ENCODE measurements at regions of chr21 and their contacts with region 1.

Region 1: GRCh38 chr21:38170280-38170679 is 86.5 kb upstream of the KCNJ15 start:
- DNase-seq: peak; percentile 15 to 53
- H3K4me3 ChIP-seq: no peak overlapping the region
- H3K27ac ChIP-seq: no peak overlapping the region
- H3K4me1 ChIP-seq: peaks cover 2 to 10% (median 6%) of the 10 kb centered on the region in 4 experiments; a peak in 5 of 7 replicates
- H3K27me3 ChIP-seq: no peaks in the 10 kb centered on the region; a peak in 1 of 7 replicates
- CTCF ChIP-seq: peak; percentile 68 to 87 (median 75)
- EP300 ChIP-seq: no peak
- POLR2A ChIP-seq: no peak
- RAD21 ChIP-seq: peak; percentile 92 to 95

Region 2: GRCh38 chr21:37319551-37319950 is 850.7 kb before region 1 on chr21:
- CTCF ChIA-PET with region 1: no interaction called
- POLR2A ChIA-PET with region 1: no interaction called
- DNase-seq: no peak
- H3K4me3 ChIP-seq: no peak overlapping the region
- H3K27ac ChIP-seq: no peak overlapping the region
- H3K4me1 ChIP-seq: no peaks in the 10 kb centered on the region
- H3K27me3 ChIP-seq: no peaks in the 10 kb centered on the region
- CTCF ChIP-seq: no peak
- EP300 ChIP-seq: no peak
- POLR2A ChIP-seq: no peak
- RAD21 ChIP-seq: no peak

Region 3: GRCh38 chr21:37958537-37958936 is 211.7 kb before region 1 on chr21:
- CTCF ChIA-PET with region 1: no interaction called
- POLR2A ChIA-PET with region 1: no interaction called
- DNase-seq: no peak
- H3K4me3 ChIP-seq: no peak overlapping the region
- H3K27ac ChIP-seq: no peak overlapping the region
- H3K4me1 ChIP-seq: no peaks in the 10 kb centered on the region
- H3K27me3 ChIP-seq: no peaks in the 10 kb centered on the region
- CTCF ChIP-seq: no peak
- EP300 ChIP-seq: no peak
- POLR2A ChIP-seq: no peak
- RAD21 ChIP-seq: no peak

Region 4: DNA sequence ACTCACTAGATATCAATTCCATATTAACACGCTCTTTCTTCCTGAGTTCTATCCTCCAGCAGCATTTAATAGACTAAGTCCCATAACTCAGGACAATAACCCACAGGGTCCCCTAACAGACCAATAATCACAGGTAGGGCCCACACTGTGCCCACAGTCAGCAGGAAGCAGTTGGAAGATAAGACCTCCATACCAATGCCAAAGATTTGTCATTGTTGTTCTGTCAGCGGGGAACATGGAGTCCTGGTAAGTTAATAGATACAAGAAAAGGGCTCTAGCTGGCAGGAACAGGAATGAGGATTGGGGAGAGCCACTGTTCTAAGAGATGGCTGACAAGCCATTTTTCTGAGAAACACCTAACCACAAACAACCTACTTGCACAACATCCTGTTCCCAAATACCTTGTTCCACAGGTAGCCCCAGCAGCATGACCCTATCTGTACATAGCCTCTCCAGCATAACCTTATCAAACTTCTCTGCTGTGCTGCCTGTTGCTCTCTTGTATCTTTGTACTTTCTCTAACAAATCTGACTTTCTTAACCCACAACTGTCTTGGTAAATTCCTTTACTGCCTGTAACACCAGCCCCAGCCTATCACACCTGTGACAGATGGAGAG is 55.5 kb before region 1 on chr21:
- CTCF ChIA-PET with region 1: no interaction called
- POLR2A ChIA-PET with region 1: no interaction called
- DNase-seq: no peak
- H3K4me3 ChIP-seq: no peak overlapping the region
- H3K27ac ChIP-seq: no peak overlapping the region
- H3K4me1 ChIP-seq: no peaks in the 10 kb centered on the region
- H3K27me3 ChIP-seq: no peaks in the 10 kb centered on the region
- CTCF ChIP-seq: no peak
- EP300 ChIP-seq: no peak
- POLR2A ChIP-seq: no peak
- RAD21 ChIP-seq: no peak

Region 5: GRCh38 chr21:38159355-38159754 is 10.9 kb before region 1 on chr21:
- CTCF ChIA-PET with region 1: interaction called, 73 read pairs
- POLR2A ChIA-PET with region 1: no interaction called
- DNase-seq: peak; percentile 39 to 72
- H3K4me3 ChIP-seq: no peak overlapping the region
- H3K27ac ChIP-seq: no peak overlapping the region
- H3K4me1 ChIP-seq: no peaks in the 10 kb centered on the region
- H3K27me3 ChIP-seq: no peaks in the 10 kb centered on the region
- CTCF ChIP-seq: peak; percentile 66 to 88 (median 75)
- EP300 ChIP-seq: no peak
- POLR2A ChIP-seq: no peak
- RAD21 ChIP-seq: peak; percentile 81 to 88

Region 6: GRCh38 chr21:38181096-38181495 is 10.8 kb after region 1 on chr21:
- CTCF ChIA-PET with region 1: interaction called, 18 read pairs
- POLR2A ChIA-PET with region 1: no interaction called
- DNase-seq: no peak
- H3K4me3 ChIP-seq: no peak overlapping the region
- H3K27ac ChIP-seq: no peak overlapping the region
- H3K4me1 ChIP-seq: no peaks in the 10 kb centered on the region
- H3K27me3 ChIP-seq: no peaks in the 10 kb centered on the region
- CTCF ChIP-seq: no peak
- EP300 ChIP-seq: no peak
- POLR2A ChIP-seq: no peak
- RAD21 ChIP-seq: no peak

Region 7: GRCh38 chr21:38205940-38206339 is 35.7 kb after region 1 on chr21:
- CTCF ChIA-PET with region 1: interaction called, 14 read pairs
- POLR2A ChIA-PET with region 1: no interaction called
- DNase-seq: no peak
- H3K4me3 ChIP-seq: no peak overlapping the region
- H3K27ac ChIP-seq: no peak overlapping the region
- H3K4me1 ChIP-seq: no peaks in the 10 kb centered on the region
- H3K27me3 ChIP-seq: no peaks in the 10 kb centered on the region
- CTCF ChIP-seq: no peak
- EP300 ChIP-seq: no peak
- POLR2A ChIP-seq: no peak
- RAD21 ChIP-seq: no peak

Region 8: GRCh38 chr21:38219049-38219628 is 48.9 kb after region 1 on chr21:
- CTCF ChIA-PET with region 1: interaction called, 20 read pairs
- POLR2A ChIA-PET with region 1: no interaction called
- DNase-seq: peak; percentile 10 to 87
- H3K4me3 ChIP-seq: no peak overlapping the region
- H3K27ac ChIP-seq: no peak overlapping the region
- H3K4me1 ChIP-seq: no peaks in the 10 kb centered on the region
- H3K27me3 ChIP-seq: no peaks in the 10 kb centered on the region
- CTCF ChIP-seq: peak; percentile 83 to 88 (median 85)
- EP300 ChIP-seq: no peak
- POLR2A ChIP-seq: no peak
- RAD21 ChIP-seq: peak; percentile 73 to 88

Region 9: GRCh38 chr21:38333301-38334272 is 163.3 kb after region 1 on chr21:
- CTCF ChIA-PET with region 1: interaction called, 28 read pairs
- POLR2A ChIA-PET with region 1: no interaction called
- DNase-seq: no peak
- H3K4me3 ChIP-seq: no peak overlapping the region
- H3K27ac ChIP-seq: no peak overlapping the region
- H3K4me1 ChIP-seq: no peaks in the 10 kb centered on the region
- H3K27me3 ChIP-seq: no peaks in the 10 kb centered on the region
- CTCF ChIP-seq: peak; percentile 44 to 53 (median 47); a peak in 3 of 4 replicates
- EP300 ChIP-seq: no peak
- POLR2A ChIP-seq: no peak
- RAD21 ChIP-seq: peak; percentile 67 to 81

Region 10: GRCh38 chr21:38365521-38365920 is 195.2 kb after region 1 on chr21:
- CTCF ChIA-PET with region 1: no interaction called
- POLR2A ChIA-PET with region 1: no interaction called
- DNase-seq: no peak
- H3K4me3 ChIP-seq: no peak overlapping the region
- H3K27ac ChIP-seq: no peak overlapping the region
- H3K4me1 ChIP-seq: no peaks in the 10 kb centered on the region
- H3K27me3 ChIP-seq: no peaks in the 10 kb centered on the region
- CTCF ChIP-seq: no peak
- EP300 ChIP-seq: no peak
- POLR2A ChIP-seq: no peak
- RAD21 ChIP-seq: no peak

Measured in H1 (cell line).